Activated CD8-positive, alpha-beta T cell treated with anti-CD3 and anti-CD28 coated beads for 36 hours (primary cell): ENCODE measurements at regions of chr17 and their contacts with region 1.

Region 1: GRCh38 chr17:7989781-7990655 is 12.4 kb upstream of the GUCY2D start:
- DNase-seq: peak; percentile 96
- ATAC-seq: peak; percentile 95
- H3K4me3 Mint-ChIP-seq: peak overlapping the region; percentile 73
- H3K27ac Mint-ChIP-seq: peak overlapping the region; percentile 92
- H3K4me1 Mint-ChIP-seq: peaks cover 20% of the 10 kb centered on the region
- H3K27me3 Mint-ChIP-seq: no peaks in the 10 kb centered on the region
- CTCF ChIP-seq: peak; percentile 84

Region 2: DNA sequence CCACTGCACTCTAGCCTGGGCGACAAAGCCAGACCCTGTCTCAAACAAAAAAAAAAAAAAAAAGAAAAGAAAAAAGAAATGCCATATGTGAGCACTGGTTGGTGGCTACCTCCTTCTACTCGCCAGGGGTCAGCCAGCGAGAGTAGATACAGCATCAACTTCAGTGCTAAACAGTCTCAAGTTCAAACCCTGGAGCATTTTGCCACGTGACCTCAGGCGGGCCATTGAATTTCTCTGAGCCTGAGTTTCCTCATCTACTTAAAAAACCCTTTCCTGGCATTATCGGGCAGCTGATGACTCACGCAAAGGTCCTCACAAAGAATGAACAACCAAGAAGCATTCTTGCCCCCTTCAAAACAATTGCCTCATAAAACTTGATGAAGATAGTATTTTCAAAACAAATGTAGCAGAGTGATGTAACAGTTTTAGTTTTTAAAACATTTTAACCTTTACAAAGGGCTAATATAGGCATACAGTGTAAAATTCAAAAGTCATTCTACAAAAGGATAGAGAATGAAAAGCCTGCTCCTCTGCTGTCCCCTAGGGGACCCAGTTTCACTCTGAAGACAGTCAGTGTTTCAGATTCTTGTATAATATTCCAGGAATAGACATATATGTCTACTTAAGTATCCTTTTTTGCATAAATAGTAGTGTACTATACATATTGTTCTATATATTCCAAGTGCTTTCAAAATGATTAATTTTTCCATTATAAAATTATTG is 244.1 kb before region 1 on chr17:
- CTCF ChIA-PET with region 1: interaction called, 21 read pairs
- POLR2A ChIA-PET with region 1: no interaction called
- intact Hi-C with region 1: no loop called
- DNase-seq: no peak
- ATAC-seq: no peak
- H3K4me3 Mint-ChIP-seq: no peak overlapping the region
- H3K27ac Mint-ChIP-seq: no peak overlapping the region
- H3K4me1 Mint-ChIP-seq: no peaks in the 10 kb centered on the region
- H3K27me3 Mint-ChIP-seq: peaks cover 1% of the 10 kb centered on the region
- CTCF ChIP-seq: no peak

Region 3: DNA sequence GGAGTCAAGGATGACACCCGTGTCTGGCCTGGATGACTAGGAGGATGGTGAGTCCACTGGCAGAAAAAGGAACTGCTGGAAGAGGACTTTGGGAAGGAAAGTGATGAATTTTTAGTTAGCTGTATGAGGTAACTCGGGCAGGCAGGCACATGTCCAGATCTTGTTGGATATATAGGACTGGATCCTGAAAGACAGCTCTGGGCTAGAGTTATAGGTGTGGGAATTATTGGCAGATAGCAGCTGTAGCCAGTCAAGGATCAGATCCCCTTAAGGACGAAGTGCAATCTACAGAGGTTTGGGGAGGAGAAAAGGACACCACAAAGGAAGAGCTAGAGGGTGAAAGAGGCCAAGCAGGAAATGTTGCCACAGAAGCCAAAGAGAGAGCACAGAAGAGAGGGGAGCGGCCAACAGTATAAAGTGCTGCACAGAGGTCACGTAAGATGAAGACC is 122.1 kb before region 1 on chr17:
- CTCF ChIA-PET with region 1: interaction called, 78 read pairs
- POLR2A ChIA-PET with region 1: interaction called, 5 read pairs
- intact Hi-C with region 1: loop called (anchors 2 kb)
- DNase-seq: no peak
- ATAC-seq: peak; percentile 74
- H3K4me3 Mint-ChIP-seq: peak overlapping the region; percentile 2
- H3K27ac Mint-ChIP-seq: peak overlapping the region; percentile 78
- H3K4me1 Mint-ChIP-seq: peaks cover 26% of the 10 kb centered on the region
- H3K27me3 Mint-ChIP-seq: no peaks in the 10 kb centered on the region
- CTCF ChIP-seq: no peak

Region 4: GRCh38 chr17:7922845-7923628 is 67.0 kb before region 1 on chr17:
- CTCF ChIA-PET with region 1: interaction called, 214 read pairs
- POLR2A ChIA-PET with region 1: interaction called, 21 read pairs
- intact Hi-C with region 1: no loop called
- DNase-seq: peak; percentile 91
- ATAC-seq: peak; percentile 98
- H3K4me3 Mint-ChIP-seq: peak overlapping the region; percentile 55
- H3K27ac Mint-ChIP-seq: peak overlapping the region; percentile 82
- H3K4me1 Mint-ChIP-seq: peaks cover 19% of the 10 kb centered on the region
- H3K27me3 Mint-ChIP-seq: no peaks in the 10 kb centered on the region
- CTCF ChIP-seq: no peak

Region 5: DNA sequence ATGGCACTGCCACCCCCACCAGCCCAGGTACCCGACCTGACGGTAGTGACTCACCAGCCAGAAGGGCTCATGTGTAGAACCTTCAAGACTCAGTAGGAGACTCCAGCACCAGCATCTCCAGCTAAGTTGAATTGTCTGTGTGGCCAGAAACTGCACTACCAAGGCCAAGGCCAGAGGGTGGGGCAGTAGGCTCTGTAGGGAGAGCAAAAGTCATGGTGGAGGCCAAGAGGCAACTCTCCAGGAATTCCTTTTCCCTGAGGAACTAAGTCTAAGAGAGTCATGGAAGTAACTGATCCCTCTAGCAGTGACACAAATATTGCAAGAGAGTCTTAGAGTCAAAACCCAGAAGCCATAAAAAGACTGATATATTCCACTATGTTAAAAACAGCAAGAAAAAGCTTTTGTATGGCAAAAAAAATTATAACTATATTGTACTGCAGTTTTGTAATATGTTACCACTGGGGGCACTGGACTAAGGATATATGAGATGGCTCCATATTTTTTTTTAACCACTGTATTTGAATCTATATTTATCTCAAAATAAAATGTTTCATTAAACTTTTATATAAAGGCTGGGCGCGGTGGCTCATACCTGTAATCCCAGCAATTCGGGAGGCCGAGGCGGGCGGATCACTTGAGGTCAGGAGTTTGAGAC is 17.8 kb before region 1 on chr17:
- CTCF ChIA-PET with region 1: interaction called, 18 read pairs
- POLR2A ChIA-PET with region 1: no interaction called
- intact Hi-C with region 1: no loop called
- DNase-seq: no peak
- ATAC-seq: no peak
- H3K4me3 Mint-ChIP-seq: no peak overlapping the region
- H3K27ac Mint-ChIP-seq: no peak overlapping the region
- H3K4me1 Mint-ChIP-seq: no peaks in the 10 kb centered on the region
- H3K27me3 Mint-ChIP-seq: peaks cover 4% of the 10 kb centered on the region
- CTCF ChIP-seq: peak; percentile 21

Region 6: GRCh38 chr17:8041249-8041928 is 51.4 kb after region 1 on chr17:
- CTCF ChIA-PET with region 1: interaction called, 44 read pairs
- POLR2A ChIA-PET with region 1: interaction called, 3 read pairs
- intact Hi-C with region 1: no loop called
- DNase-seq: peak; percentile 68
- ATAC-seq: peak; percentile 67
- H3K4me3 Mint-ChIP-seq: no peak overlapping the region
- H3K27ac Mint-ChIP-seq: no peak overlapping the region
- H3K4me1 Mint-ChIP-seq: peaks cover 4% of the 10 kb centered on the region
- H3K27me3 Mint-ChIP-seq: peaks cover 18% of the 10 kb centered on the region
- CTCF ChIP-seq: peak; percentile 72